Upper lobe of right lung (tissue), 1 donor: ENCODE measurements at regions of chr9 and their contacts with region 1.

Region 1: DNA sequence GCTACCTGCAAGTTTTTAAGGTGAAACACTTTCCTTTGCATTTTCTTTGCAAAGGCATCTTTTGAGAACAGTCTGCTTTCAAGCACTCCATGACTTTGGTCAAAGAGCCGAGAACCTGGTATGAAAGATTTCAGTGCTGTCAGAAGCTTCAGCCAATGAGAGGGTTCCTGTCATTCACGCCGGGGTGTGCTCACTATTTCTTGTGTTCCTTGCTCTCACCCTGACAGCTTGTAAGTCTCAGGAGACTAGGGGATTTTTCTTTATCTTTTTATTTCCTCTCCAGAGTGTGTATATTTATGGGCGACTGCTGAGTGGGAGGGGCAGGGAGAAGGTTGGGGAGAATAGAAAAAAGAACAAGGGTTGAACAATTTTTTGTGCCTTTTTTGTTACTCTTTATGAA is 334.0 kb downstream of the PSAT1 start:
- DNase-seq: no peak
- ATAC-seq: no peak
- H3K4me3 ChIP-seq: no peak overlapping the region
- H3K27ac ChIP-seq: no peak overlapping the region
- H3K4me1 ChIP-seq: no peaks in the 10 kb centered on the region
- H3K27me3 ChIP-seq: no peaks in the 10 kb centered on the region
- CTCF ChIP-seq: no peak

Region 2: GRCh38 chr9:78695519-78695918 is 64.6 kb after region 1 on chr9:
- intact Hi-C with region 1: loop called (anchors 2 kb)
- DNase-seq: no peak
- ATAC-seq: peak; percentile 48
- H3K4me3 ChIP-seq: no peak overlapping the region
- H3K27ac ChIP-seq: no peak overlapping the region
- H3K4me1 ChIP-seq: no peaks in the 10 kb centered on the region
- H3K27me3 ChIP-seq: no peaks in the 10 kb centered on the region
- CTCF ChIP-seq: no peak